ENCODE measurements at regions of chr18 and their contacts with region 1.

Region 1: DNA sequence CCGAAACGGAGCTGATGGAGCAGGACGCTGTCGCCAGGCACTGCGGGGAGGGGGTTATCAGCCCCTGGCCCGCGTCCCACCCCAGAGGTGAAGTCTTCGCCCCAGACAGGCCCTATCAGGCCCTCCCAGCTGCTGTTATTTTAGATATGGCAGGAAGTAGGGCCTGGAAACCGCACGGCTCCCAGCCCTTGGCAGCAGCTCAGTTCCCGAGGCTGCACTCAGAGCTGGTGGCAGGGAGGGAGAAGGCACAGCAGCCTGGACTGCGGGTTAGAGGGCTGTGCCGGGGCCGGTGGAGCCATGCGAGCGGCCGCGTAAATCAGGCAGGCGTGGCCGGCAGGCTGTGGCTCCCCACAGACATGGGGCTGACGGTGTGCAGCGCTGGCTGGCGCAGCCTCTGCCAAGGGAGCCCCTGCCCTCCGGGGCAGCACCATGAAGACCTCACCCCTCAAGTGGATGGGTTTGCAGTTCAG is 111.4 kb downstream of the NFATC1 start:
- DNase-seq: peak; percentile 90

Region 2: GRCh38 chr18:79315596-79315995 is 191.5 kb before region 1 on chr18:
- intact Hi-C with region 1: no loop called
- DNase-seq: no peak

Region 3: GRCh38 chr18:79395761-79396387 is 111.2 kb before region 1 on chr18 and contains the start of gene NFATC1:
- intact Hi-C with region 1: loop called (anchors 2 kb)
- DNase-seq: peak; percentile 90
- total RNA-seq, gene NFATC1: 16.4 TPM

Region 4: GRCh38 chr18:79458131-79458838 is 48.8 kb before region 1 on chr18:
- intact Hi-C with region 1: loop called (anchors 2 kb)
- DNase-seq: peak; percentile 82

Region 5: DNA sequence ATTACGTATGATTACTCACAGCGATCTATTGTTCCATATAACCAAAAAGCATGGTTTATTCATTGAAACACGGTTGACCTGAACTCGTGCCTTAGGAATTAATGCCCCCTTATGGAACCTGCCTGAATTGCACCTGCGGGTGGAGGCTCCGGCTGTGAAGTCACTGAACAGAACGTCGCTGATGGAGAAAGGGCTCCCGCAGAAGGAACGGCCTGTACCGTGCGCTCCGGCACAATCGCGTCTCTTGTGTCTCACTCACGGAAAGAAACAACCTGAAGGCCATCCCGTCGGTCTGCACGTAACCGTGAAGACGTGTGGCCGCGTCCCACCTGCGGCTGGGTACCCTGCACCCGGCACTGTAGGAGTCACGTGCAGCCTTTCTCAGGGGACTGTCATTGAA is 21.7 kb after region 1 on chr18:
- intact Hi-C with region 1: loop called (anchors 2 kb)
- DNase-seq: peak; percentile 75

Region 6: GRCh38 chr18:79588636-79589481 is 81.7 kb after region 1 on chr18:
- intact Hi-C with region 1: loop called (anchors 1 kb)
- DNase-seq: peak; percentile 88